ENCODE measurements at regions of chr20 and their contacts with region 1.

Region 1: DNA sequence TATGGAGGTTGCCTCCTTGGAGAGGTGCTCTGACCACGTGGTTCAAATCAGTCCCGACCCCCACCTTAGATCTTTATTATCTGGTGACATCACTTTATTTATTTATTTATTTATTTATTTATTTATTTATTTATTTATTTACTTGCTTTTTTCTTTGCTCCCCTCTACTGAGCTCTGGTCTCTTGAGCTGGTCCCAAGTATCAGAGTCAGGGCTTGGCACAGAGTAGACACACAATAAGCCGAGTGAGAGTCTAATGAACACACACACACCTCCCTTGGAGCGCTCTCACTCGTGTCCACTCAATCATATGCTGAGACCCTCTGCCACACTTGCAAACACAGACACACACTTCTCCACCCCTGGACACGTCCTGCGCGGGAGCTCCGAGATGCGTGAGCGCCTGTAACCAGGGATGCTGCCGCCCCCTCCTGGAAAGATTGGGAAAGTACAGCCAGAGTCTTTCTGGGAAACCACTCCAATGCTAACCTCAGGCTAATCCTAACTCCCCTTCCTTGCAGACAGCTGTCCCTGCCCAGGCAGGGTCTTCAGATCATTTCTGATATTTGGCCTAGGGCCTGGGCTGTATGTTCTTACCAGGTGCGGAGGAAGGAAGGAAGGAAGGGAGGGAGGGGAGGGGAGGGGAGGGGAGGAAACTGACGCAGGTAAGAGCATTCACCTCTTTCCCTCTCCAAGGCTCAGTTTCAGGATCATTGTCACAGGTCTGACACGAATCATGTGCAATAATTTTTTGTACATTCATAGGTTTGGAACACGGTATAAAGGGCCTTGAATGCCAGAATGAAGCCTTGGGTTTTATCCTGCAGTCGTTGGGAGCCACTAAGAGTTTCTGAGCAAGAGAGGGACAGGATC is 70.9 kb downstream of the STK35 start:
- DNase-seq: peak; percentile 74
- ATAC-seq: peak; percentile 89
- H3K4me3 ChIP-seq: no peak overlapping the region; the same call in 1 of the 2 replicates
- H3K27ac ChIP-seq: no peak overlapping the region
- H3K4me1 ChIP-seq: no peaks in the 10 kb centered on the region
- H3K27me3 ChIP-seq: peaks cover 40% of the 10 kb centered on the region
- CTCF ChIP-seq: peak; percentile 95

Region 2: GRCh38 chr20:1764136-1765033 is 408.2 kb before region 1 on chr20:
- CTCF ChIA-PET with region 1: no interaction called
- POLR2A ChIA-PET with region 1: no interaction called
- intact Hi-C with region 1: loop called (anchors 5 kb)
- DNase-seq: peak; percentile 84
- ATAC-seq: peak; percentile 86
- H3K4me3 ChIP-seq: no peak overlapping the region
- H3K27ac ChIP-seq: peak overlapping the region; percentile 13; the same call in 1 of the 2 replicates
- H3K4me1 ChIP-seq: peaks cover 31% of the 10 kb centered on the region
- H3K27me3 ChIP-seq: no peaks in the 10 kb centered on the region
- CTCF ChIP-seq: peak; percentile 95

Region 3: GRCh38 chr20:1965520-1966351 is 206.8 kb before region 1 on chr20:
- CTCF ChIA-PET with region 1: interaction called, 3 read pairs
- POLR2A ChIA-PET with region 1: no interaction called
- intact Hi-C with region 1: loop called (anchors 1 kb)
- DNase-seq: peak; percentile 74
- ATAC-seq: peak; percentile 92
- H3K4me3 ChIP-seq: no peak overlapping the region
- H3K27ac ChIP-seq: no peak overlapping the region
- H3K4me1 ChIP-seq: no peaks in the 10 kb centered on the region; the same call in 1 of the 2 replicates
- H3K27me3 ChIP-seq: peaks cover 68% of the 10 kb centered on the region
- CTCF ChIP-seq: peak; percentile 99

Region 4: GRCh38 chr20:2086177-2086979 is 86.2 kb before region 1 on chr20:
- CTCF ChIA-PET with region 1: interaction called, 3 read pairs
- POLR2A ChIA-PET with region 1: no interaction called
- intact Hi-C with region 1: loop called (anchors 1 kb)
- DNase-seq: no peak
- ATAC-seq: peak; percentile 51; the same call in 1 of the 2 replicates
- H3K4me3 ChIP-seq: no peak overlapping the region
- H3K27ac ChIP-seq: no peak overlapping the region
- H3K4me1 ChIP-seq: no peaks in the 10 kb centered on the region
- H3K27me3 ChIP-seq: peaks cover 81% of the 10 kb centered on the region
- CTCF ChIP-seq: peak; percentile 47; the same call in 1 of the 2 replicates

Region 5: DNA sequence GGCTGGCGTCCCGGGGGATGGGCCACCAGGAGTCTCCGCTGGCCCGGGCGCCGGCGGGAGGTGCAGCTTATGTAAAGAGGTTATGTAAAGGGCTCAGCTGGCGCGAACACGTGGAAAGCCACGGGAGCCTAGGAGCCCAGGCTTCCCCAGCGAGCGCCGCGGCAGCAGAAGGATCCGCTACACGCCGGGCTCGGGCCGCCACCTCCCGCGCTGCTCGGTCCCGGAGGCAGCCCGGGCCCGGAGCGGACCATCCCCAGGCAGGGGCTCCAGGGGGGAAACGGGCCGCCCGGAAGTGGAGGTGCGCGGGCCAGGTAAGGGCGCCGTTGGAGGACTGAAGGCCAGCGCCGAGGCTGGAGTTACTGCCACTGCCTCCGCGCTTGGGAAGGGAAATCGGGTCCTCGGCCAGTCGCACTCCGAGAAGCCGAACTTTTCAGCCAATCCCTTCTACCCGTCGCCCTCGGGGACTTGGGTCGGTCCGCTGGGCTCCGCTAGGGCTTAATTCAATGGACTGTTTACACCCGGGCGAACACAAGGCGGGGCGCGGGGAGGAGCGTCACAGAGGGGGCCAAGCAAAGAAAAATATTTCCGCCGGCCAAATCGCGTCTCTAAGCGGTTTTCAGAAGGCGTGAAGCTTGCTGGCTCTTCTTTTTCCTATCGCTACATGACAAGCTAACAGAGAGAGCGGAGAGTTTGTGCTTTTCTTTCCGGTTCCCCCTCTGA is 70.5 kb before region 1 on chr20:
- CTCF ChIA-PET with region 1: interaction called, 14 read pairs
- POLR2A ChIA-PET with region 1: interaction called, 3 read pairs
- intact Hi-C with region 1: no loop called
- DNase-seq: peak; percentile 90
- ATAC-seq: peak; percentile 79
- H3K4me3 ChIP-seq: peak overlapping the region; percentile 87
- H3K27ac ChIP-seq: peak overlapping the region; percentile 88
- H3K4me1 ChIP-seq: peaks cover 27% of the 10 kb centered on the region
- H3K27me3 ChIP-seq: no peaks in the 10 kb centered on the region
- CTCF ChIP-seq: no peak